ENCODE measurements at regions of chr15 and their contacts with region 1.

Region 1: DNA sequence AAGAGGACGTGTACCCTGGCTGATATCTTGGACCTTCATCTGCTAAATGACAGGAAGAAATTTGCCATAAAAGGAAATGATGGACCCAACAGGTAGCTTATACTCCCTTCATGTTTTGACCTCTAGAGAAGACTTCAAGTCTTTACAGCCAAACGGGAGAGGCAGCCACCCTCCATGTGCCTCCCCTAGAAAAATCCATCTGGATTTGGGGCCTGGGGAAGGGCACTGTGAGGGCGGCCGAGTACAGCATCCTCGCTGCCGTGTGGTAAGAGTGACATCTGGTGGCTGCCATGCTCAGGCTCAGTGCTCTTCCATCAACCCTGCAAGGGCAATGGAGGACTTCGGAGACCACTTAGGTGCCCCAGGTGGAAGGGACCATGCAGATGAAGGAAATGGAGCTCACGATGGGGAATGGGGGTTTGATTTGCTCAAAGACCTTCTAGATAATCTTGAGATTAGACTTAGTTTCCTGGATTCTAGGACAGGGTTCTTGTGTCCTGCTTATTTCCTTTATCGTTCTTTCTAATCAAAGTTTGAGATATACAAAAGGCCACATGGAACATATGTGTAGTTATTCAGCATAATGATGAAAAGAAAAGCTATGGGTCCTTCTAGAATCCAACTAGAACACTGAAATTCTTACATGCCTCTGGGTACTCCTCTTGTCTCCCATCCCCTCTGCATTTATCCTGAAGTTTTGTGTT is 44.4 kb downstream of the AQP9 start:
- DNase-seq: no peak
- H3K4me3 ChIP-seq: no peak overlapping the region
- H3K27ac ChIP-seq: no peak overlapping the region
- H3K4me1 ChIP-seq: no peaks in the 10 kb centered on the region
- H3K27me3 ChIP-seq: peaks cover 0 to 12% (median 0%) of the 10 kb centered on the region in 7 donors
- CTCF ChIP-seq: peak in 10 of 11 experiments; percentile 37 to 70 (median 58)
- POLR2A ChIP-seq: no peak

Region 2: DNA sequence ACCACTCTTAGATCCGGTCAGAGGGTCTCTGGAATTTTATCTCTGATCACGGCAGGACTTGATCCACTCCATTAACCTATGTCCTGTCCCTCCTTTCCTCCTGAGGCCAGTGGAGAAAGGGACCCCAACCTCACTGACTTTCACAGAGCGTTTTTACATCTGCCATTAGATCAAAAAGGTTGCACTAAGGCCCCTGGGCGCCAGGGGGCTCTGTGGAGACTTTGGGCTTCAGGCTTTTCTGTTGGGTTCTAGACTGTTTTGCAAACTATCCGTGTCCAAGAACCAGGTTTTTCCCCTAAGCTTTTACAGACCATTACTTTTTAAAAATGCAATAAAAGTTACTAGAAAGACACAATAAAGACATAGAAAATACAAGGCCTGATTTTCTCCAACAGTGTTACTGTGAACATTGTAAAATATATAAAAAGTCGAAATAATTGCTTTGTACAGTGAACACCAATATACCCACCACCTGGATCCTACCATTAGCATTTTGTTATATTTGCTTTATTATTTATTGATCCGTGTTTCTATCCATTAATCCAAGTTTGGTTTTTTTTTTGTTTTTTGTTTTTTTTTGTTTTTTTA is 316.4 kb before region 1 on chr15:
- intact Hi-C with region 1: loop called (anchors 5 kb)
- DNase-seq: no peak
- H3K4me3 ChIP-seq: no peak overlapping the region
- H3K27ac ChIP-seq: no peak overlapping the region
- H3K4me1 ChIP-seq: peaks cover 0 to under 1% (median 0%) of the 10 kb centered on the region in 6 donors
- H3K27me3 ChIP-seq: peaks cover 0 to 27% (median 8%) of the 10 kb centered on the region in 7 donors
- CTCF ChIP-seq: peak in 9 of 11 experiments; percentile 36 to 74 (median 67)
- POLR2A ChIP-seq: no peak

Region 3: DNA sequence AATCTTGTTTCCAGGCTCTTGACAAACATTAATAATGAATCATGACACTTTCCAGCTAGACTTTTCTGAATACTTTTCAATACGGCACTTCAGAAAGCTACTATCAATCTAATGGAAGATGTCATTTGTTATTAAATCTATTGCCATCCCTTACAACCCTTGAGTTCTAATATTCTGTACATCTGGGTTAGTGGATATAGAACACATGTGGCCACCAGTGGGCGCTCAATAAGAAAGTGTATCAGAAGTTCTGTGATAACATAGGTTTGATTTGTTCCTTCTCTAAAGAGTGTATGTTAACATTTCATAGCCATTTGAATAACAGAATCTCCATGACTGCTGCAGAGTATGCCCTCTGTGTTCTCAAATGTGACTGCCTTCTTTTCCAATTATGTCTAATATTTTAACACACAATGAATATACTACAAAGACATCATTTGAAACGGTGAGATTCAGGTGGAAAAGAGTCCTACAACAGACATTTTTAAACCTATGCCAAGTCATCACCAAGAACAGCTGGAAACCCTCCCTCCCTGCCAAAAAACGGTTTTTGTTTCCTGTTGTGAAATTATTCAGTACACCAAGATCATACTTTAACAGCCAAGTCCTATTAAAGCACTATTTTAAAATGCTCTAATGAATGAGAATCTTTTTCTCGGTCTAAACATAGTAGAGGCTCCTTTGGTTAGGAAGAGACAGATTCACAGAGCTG is 139.3 kb before region 1 on chr15:
- intact Hi-C with region 1: loop called (anchors 10 kb)
- DNase-seq: no peak
- H3K4me3 ChIP-seq: no peak overlapping the region
- H3K27ac ChIP-seq: no peak overlapping the region
- H3K4me1 ChIP-seq: peaks cover 0 to 2% (median 0%) of the 10 kb centered on the region in 6 donors
- H3K27me3 ChIP-seq: peaks cover 0 to 8% (median 0%) of the 10 kb centered on the region in 7 donors
- CTCF ChIP-seq: peak in 10 of 11 experiments; percentile 25 to 77 (median 56)
- POLR2A ChIP-seq: no peak

Region 4: GRCh38 chr15:58066042-58066867 is 116.4 kb before region 1 on chr15:
- intact Hi-C with region 1: no loop called
- DNase-seq: peak; percentile 92
- H3K4me3 ChIP-seq: peak overlapping the region; percentile 18 to 74 (median 49)
- H3K27ac ChIP-seq: peak overlapping the region in 4 of 8 donors; percentile 11 to 78 (median 34)
- H3K4me1 ChIP-seq: peaks cover 4 to 23% (median 19%) of the 10 kb centered on the region in 6 donors
- H3K27me3 ChIP-seq: peaks cover 8 to 84% (median 51%) of the 10 kb centered on the region in 7 donors
- CTCF ChIP-seq: peak; percentile 26 to 94 (median 78)
- POLR2A ChIP-seq: no peak

Region 5: GRCh38 chr15:58229297-58229768 is 46.7 kb after region 1 on chr15:
- intact Hi-C with region 1: no loop called
- DNase-seq: no peak
- H3K4me3 ChIP-seq: no peak overlapping the region
- H3K27ac ChIP-seq: no peak overlapping the region
- H3K4me1 ChIP-seq: peaks cover 0 to 27% (median 14%) of the 10 kb centered on the region in 6 donors
- H3K27me3 ChIP-seq: peaks cover 0 to 12% (median 0%) of the 10 kb centered on the region in 7 donors
- CTCF ChIP-seq: no peak
- POLR2A ChIP-seq: no peak

Region 6: DNA sequence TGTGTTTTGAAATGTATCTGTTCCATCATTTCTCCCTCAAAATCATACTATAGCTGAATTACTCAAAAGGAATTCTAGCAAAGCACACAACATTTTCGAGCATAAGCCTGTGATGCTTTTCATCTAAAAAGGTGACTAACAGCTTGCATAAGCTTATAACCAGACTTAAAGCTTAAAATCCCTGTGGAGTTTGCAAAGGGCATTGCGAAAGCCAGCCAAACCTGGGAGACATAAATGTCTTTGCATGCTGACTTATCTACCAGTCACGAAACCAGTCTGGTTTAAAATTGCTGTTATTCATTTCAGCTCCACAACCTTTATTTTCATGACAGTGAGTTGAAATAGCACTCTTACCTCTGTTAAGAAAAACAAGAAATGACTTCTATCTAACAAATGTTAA is 213.6 kb after region 1 on chr15:
- intact Hi-C with region 1: no loop called
- DNase-seq: no peak
- H3K4me3 ChIP-seq: no peak overlapping the region
- H3K27ac ChIP-seq: no peak overlapping the region
- H3K4me1 ChIP-seq: peaks cover 0 to 4% (median 0%) of the 10 kb centered on the region in 6 donors
- H3K27me3 ChIP-seq: no peaks in the 10 kb centered on the region
- CTCF ChIP-seq: no peak
- POLR2A ChIP-seq: no peak

Measured in spleen (tissue), 13 donors.